WTC11 (cell line): ENCODE measurements at regions of chr1 and their contacts with region 1.

Region 1: DNA sequence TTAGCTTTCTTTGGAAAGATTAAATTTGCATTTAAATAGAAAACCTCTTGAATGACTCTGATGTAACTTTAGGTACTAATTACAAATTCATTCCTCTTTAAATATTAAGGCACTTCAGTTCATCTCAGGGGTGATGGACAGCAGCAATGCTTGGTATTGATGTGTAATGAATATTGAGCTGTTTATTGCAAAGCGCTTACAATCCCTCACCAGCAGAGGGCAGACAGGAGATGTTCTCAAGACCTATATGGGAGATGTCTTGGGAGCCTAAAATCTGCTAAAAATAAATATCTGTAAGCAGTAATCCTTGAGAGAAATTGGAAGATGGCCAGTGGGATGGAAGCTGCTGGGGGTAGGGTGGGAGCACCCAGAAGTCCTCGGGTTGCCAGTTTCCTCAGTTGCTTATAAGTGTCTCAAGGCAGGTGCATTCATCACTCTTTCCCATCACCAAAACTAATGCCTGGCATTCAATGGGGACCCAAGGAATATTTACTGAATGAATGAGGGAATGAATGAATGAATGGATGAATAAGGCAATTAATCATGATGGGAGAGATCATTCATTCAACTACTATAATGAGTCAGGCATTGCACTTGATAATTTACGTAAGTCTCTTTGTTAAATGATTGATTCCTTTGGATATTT is 2.3 kb downstream of the KLHDC8A start:
- DNase-seq: peak; percentile 68
- ATAC-seq: no peak
- H3K4me3 Mint-ChIP-seq: no peak overlapping the region
- H3K27ac Mint-ChIP-seq: no peak overlapping the region
- H3K4me1 Mint-ChIP-seq: peaks cover 79% of the 10 kb centered on the region
- H3K27me3 Mint-ChIP-seq: no peaks in the 10 kb centered on the region; the same call in 1 of the 2 replicates
- CTCF ChIP-seq: peak; percentile 83

Region 2: DNA sequence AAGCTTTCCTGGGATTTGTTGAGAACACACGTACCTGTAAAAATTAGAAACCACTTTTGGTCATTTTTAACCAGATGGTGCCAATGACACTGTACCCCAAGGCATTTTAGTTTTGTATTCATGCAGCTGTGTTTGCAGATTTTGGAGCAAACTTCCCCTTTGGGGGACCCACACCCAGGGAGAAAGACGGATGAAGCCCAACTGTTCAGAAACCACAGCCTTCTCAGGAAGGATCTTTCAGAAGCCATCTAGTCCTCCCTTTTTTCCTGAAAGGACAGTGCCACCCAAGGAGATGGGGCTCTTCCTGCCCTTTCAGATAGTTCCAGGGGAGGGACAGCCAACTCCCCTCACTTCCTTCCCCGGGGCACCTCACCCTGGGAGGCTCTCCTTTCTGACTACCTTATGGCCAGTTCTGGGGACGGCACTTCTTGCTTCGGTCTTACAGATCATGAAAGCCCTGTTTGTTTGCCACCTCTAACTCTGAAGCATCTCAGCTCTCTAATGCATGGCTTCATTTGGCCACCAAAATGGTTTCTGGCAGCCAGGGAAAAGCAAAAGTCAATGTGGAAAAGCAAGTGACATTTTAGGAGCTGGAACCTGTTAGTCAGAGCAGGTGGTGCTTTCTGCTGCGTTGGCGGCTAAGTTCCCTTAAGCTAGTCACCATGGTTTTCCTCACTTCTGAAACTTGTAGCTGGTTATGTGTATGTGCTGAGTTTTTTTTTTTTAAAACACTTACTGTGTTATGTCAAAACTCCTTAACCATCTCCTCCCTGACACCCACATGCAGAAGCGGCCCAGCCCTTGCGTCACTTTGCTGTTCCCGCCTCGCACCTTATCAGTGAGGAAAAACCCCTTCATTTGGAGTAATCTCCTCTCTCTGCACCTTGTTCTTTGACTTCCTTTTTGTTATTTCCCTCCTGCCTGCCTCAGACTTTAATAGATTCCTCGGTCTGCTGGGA is 116.6 kb before region 1 on chr1:
- CTCF ChIA-PET with region 1: no interaction called
- POLR2A ChIA-PET with region 1: no interaction called
- DNase-seq: no peak
- ATAC-seq: no peak
- H3K4me3 Mint-ChIP-seq: no peak overlapping the region
- H3K27ac Mint-ChIP-seq: 0 out of 2 replicates have a peak overlapping the region, but pooled peaks have one; percentile 32
- H3K4me1 Mint-ChIP-seq: peaks cover 9% of the 10 kb centered on the region
- H3K27me3 Mint-ChIP-seq: no peaks in the 10 kb centered on the region
- CTCF ChIP-seq: no peak

Region 3: DNA sequence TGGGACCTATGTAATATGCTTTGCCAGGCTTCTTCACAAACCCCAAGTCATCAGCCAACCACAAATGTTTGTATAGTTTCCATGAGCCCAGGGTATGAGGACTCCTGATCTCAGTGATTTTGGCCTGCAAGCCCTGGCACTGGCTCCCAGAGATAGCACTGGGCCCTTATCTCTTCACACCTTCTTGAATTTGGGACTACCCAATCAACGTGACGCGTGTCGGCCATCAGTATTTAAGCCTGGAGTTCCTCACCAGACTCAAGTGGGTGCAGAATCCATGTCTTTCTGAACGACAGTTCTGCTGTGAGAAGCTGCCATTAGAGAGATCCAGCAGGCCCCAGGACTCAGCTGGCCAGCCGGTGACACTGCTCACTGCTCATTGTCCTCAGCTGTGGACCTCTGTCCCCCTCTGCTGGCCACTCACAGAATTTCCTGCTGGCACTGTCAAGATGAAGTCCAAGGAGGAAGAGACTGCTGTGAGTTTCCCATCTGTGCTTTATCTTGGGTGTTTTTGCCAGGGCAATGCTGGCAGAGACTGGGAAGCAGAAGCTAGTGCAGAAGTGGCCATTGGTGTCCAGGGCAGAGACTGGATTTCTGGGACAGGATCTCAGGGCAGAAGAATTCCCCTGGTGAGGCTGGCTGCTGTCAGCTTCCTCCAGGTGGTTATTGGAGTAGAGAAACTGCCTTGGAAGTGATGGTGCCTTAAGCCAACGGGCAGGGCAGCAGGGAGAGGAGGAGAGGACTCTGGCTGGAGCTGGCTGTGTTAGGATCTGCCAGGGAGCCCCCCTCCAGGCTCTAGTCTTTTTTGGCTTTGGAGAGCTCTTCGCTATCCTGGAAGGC is 98.2 kb before region 1 on chr1:
- CTCF ChIA-PET with region 1: interaction called, 11 read pairs
- POLR2A ChIA-PET with region 1: no interaction called
- DNase-seq: peak; percentile 93
- ATAC-seq: peak; percentile 90
- H3K4me3 Mint-ChIP-seq: no peak overlapping the region
- H3K27ac Mint-ChIP-seq: 0 out of 2 replicates have a peak overlapping the region, but pooled peaks have one; percentile 83
- H3K4me1 Mint-ChIP-seq: peaks cover 17% of the 10 kb centered on the region
- H3K27me3 Mint-ChIP-seq: no peaks in the 10 kb centered on the region
- CTCF ChIP-seq: peak; percentile 98

Region 4: DNA sequence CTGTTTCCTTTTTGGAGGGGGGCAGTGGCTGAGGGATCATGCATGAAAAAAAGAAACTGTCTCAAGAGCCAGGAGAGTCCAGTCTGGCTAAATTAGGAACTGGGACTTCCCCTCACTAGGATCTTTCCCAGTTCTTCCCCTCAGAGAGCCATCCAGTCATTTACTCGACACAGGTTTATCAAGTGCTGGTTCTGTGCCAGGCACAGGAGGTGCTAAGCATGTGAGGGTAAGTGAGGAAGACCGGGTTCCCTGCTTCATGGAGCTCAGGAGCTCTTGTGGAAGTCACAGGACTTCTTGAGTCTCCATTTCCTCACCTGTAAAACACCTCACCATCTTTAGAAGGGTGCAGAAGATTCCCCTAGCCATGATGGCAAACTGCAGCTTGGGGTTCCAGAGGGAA is 24.2 kb before region 1 on chr1:
- CTCF ChIA-PET with region 1: interaction called, 122 read pairs
- POLR2A ChIA-PET with region 1: interaction called, 4 read pairs
- DNase-seq: no peak
- ATAC-seq: no peak
- H3K4me3 Mint-ChIP-seq: no peak overlapping the region
- H3K27ac Mint-ChIP-seq: no peak overlapping the region
- H3K4me1 Mint-ChIP-seq: peaks cover 10% of the 10 kb centered on the region
- H3K27me3 Mint-ChIP-seq: no peaks in the 10 kb centered on the region; the same call in 1 of the 2 replicates
- CTCF ChIP-seq: no peak

Region 5: GRCh38 chr1:205375835-205376545 is 21.6 kb after region 1 on chr1:
- CTCF ChIA-PET with region 1: interaction called, 35 read pairs
- POLR2A ChIA-PET with region 1: interaction called, 4 read pairs
- DNase-seq: peak; percentile 30
- ATAC-seq: peak; percentile 90
- H3K4me3 Mint-ChIP-seq: peak overlapping the region; percentile 52
- H3K27ac Mint-ChIP-seq: peak overlapping the region; percentile 80
- H3K4me1 Mint-ChIP-seq: peaks cover 46% of the 10 kb centered on the region
- H3K27me3 Mint-ChIP-seq: no peaks in the 10 kb centered on the region
- CTCF ChIP-seq: no peak

Region 6: DNA sequence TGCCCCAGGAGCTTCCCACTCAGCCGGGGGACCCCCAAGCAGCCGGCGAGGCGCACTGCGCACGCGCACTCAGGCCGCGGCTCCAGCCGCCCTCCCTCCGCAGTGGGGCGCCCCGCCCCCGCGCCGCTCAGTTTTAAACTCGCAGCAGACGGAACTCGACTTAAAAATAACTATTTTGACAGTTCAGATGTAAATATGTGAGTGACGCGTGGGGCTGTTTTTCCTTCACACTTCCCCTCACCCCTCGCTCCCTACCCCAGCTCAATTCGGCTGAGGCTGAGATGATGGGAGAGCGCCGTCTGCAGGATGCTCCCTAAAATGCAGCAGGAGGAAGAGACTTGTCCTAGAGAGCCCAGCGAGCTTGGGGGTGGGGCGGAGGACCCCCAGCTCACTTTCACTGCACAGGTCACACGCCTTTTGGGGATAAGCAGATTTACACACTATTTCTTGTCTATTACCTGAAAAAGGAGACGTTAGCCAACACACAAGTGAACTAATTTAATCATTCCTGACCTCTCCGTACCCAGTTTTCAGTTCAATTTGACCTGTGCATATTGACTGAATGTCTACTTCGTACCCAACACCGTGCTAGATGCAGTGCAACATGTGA is 76.4 kb after region 1 on chr1:
- CTCF ChIA-PET with region 1: interaction called, 46 read pairs
- POLR2A ChIA-PET with region 1: interaction called, 3 read pairs
- DNase-seq: peak; percentile 81
- ATAC-seq: peak; percentile 83
- H3K4me3 Mint-ChIP-seq: peak overlapping the region; percentile 83
- H3K27ac Mint-ChIP-seq: no peak overlapping the region
- H3K4me1 Mint-ChIP-seq: peaks cover 31% of the 10 kb centered on the region
- H3K27me3 Mint-ChIP-seq: peaks cover 82% of the 10 kb centered on the region
- CTCF ChIP-seq: peak; percentile 81

Region 7: DNA sequence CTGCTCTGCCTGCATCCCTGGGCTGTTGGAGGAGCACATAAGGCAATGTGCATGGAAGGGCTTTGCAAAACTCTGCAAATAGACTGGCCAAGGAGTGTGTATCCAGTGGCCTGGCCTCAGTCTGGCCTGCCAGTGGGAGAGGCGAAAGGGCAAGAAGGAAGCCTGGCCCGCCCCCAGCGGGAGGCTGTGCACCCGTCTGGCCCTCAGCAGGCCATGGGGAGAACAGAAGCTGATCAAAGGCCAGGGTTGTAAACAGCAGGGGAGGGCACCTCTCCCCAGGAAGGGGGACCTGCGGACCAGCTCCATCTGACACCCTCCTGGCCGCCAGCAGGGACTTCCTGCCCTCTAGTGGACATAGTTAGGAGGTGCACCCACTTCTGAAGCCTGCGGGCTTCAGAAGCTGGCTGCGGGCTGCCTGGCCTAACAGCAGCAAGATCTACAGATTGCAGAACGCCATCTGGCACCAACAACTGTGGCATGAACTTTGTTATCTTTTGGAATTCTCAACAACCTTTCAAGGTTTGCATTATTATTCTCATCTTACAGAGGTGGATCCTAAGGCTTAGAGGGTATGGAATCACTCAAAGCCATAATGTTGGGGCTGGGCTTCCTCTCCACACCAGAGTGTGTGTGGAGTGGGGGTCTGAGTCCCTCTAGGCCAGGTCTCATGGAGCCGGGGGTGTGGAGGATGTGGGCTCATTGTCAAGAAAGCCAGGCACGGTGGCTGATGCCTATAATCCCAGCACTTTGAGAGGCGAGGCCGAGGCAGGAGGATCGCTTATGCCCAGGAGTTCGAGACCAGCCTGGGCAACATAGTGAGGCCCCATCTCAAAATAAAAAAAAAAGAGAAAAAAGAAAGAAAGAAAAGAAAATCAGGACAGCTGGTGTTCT is 131.2 kb after region 1 on chr1:
- CTCF ChIA-PET with region 1: interaction called, 90 read pairs
- POLR2A ChIA-PET with region 1: interaction called, 3 read pairs
- DNase-seq: peak; percentile 81
- ATAC-seq: peak; percentile 75
- H3K4me3 Mint-ChIP-seq: no peak overlapping the region
- H3K27ac Mint-ChIP-seq: no peak overlapping the region
- H3K4me1 Mint-ChIP-seq: peaks cover 33% of the 10 kb centered on the region
- H3K27me3 Mint-ChIP-seq: peaks cover 28% of the 10 kb centered on the region
- CTCF ChIP-seq: peak; percentile 98

Region 8: GRCh38 chr1:205535866-205536758 is 181.7 kb after region 1 on chr1:
- CTCF ChIA-PET with region 1: interaction called, 11 read pairs
- POLR2A ChIA-PET with region 1: no interaction called
- DNase-seq: peak; percentile 3
- ATAC-seq: no peak
- H3K4me3 Mint-ChIP-seq: no peak overlapping the region
- H3K27ac Mint-ChIP-seq: no peak overlapping the region
- H3K4me1 Mint-ChIP-seq: peaks cover 4% of the 10 kb centered on the region; the same call in 1 of the 2 replicates
- H3K27me3 Mint-ChIP-seq: peaks cover 59% of the 10 kb centered on the region
- CTCF ChIP-seq: no peak